AG04449 (cell line): ENCODE measurements at regions of chr7 and their contacts with region 1.

Region 1: DNA sequence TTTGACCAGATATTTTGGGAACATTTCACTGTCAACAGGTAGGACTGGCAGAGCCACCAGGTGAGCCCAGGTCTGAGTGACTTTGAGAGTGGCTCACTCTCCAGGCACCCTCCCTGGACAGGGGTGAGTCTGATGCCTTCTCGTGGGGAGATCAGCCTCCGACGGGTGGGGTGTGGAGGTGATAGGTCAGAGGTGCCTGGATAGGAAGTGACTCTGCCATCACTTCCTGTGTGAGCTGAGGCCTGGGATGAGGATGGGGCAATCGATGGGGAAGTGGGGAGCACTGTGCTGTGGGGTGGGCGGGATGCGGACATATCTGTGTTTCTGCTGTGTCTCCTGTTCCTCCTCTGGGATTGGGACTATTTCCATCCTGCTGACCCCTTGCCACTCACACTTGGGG is 34.6 kb downstream of the IFT22 start:
- DNase-seq: no peak
- H3K4me3 ChIP-seq: no peak overlapping the region
- CTCF ChIP-seq: no peak

Region 2: GRCh38 chr7:101165075-101165957 is 121.7 kb before region 1 on chr7 and contains the start of gene VGF:
- CTCF ChIA-PET with region 1: interaction called, 16 read pairs
- POLR2A ChIA-PET with region 1: no interaction called
- DNase-seq: no peak
- H3K4me3 ChIP-seq: peak within 1 kb of the TSS; percentile 13
- CTCF ChIP-seq: no peak

Region 3: GRCh38 chr7:101244375-101245146 is 42.5 kb before region 1 on chr7 and contains the start of gene FIS1:
- CTCF ChIA-PET with region 1: interaction called, 31 read pairs
- POLR2A ChIA-PET with region 1: no interaction called
- DNase-seq: no peak
- H3K4me3 ChIP-seq: peak within 1 kb of the TSS; percentile 94
- CTCF ChIP-seq: peak; percentile 94

Region 4: GRCh38 chr7:101273206-101273605 is 13.8 kb before region 1 on chr7:
- CTCF ChIA-PET with region 1: interaction called, 67 read pairs
- POLR2A ChIA-PET with region 1: no interaction called
- DNase-seq: no peak
- H3K4me3 ChIP-seq: no peak overlapping the region
- CTCF ChIP-seq: no peak

Region 5: GRCh38 chr7:101315336-101315735 is 28.3 kb after region 1 on chr7:
- CTCF ChIA-PET with region 1: interaction called, 14 read pairs
- POLR2A ChIA-PET with region 1: no interaction called
- DNase-seq: no peak
- H3K4me3 ChIP-seq: no peak overlapping the region
- CTCF ChIP-seq: peak; percentile 41

Region 6: DNA sequence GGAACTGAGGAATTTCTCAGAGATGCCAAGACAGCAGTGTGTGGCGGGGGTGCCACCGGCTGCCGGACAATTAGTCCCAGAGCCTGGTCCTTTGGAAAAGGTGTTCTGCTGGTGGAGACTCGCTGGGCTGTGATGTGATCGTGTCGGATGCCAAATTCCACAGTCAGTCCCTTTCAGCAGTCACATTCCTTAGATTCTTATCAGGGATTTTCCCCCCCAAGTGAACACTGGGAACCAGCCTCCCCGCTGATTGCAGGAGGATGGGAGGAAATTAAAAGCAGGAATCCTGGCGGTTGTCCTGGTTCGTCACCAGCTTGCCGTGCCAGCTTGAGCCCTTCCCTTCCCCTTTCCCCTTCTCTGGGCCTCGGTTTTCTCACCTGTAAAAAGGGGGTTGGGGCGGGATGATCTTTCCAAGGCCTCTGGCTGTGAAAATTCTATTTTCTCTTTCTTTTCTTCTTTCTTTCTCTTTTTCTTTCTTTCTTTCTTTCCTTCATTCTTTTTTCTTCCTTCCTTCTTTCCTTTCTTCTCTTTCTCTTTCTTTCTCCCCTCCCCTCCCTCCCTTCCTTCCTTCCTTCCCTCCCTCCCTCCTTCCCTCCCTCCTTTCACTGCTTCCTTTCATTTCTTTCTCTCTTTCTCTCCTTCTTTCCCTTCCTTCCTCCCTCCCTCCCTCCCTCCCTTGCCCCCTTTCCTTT is 115.2 kb after region 1 on chr7:
- CTCF ChIA-PET with region 1: no interaction called
- POLR2A ChIA-PET with region 1: no interaction called
- DNase-seq: peak; percentile 9
- H3K4me3 ChIP-seq: 0 out of 2 replicates have a peak overlapping the region, but pooled peaks have one; percentile 8
- CTCF ChIP-seq: no peak

Region 7: GRCh38 chr7:101644879-101645278 is 357.8 kb after region 1 on chr7:
- CTCF ChIA-PET with region 1: no interaction called
- POLR2A ChIA-PET with region 1: no interaction called
- DNase-seq: no peak
- H3K4me3 ChIP-seq: no peak overlapping the region
- CTCF ChIP-seq: no peak